Caco-2 (cell line): ENCODE measurements at regions of chr3 and their contacts with region 1.

Region 1: DNA sequence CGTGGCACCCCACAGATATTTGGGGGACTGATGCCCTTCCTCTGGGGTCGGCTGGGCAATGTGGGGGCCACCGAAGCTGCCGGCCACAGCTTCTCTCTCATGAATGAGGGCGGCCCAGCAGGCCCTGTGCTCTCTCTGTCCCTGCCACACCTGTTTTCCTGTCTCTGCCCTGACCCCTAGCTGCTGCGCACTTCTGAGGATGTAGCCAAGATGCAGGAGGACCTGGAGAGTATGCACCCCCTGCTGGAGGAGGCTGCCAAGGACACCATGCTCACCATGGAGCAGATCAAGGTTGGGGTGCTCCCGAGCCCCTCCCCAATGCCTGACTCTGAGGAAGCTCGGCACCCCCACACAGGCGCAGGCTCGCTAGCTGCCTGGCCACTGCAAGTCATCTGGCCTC is 59.7 kb downstream of the SEMA3G start:
- DNase-seq: peak; percentile 82
- H3K4me3 ChIP-seq: no peak overlapping the region
- H3K4me3 Mint-ChIP-seq: no peak overlapping the region
- H3K27ac Mint-ChIP-seq: no peak overlapping the region
- H3K4me1 ChIP-seq: no peaks in the 10 kb centered on the region
- H3K4me1 Mint-ChIP-seq: no peaks in the 10 kb centered on the region
- H3K27me3 ChIP-seq: no peaks in the 10 kb centered on the region
- H3K27me3 Mint-ChIP-seq: no peaks in the 10 kb centered on the region
- CTCF ChIP-seq: peak; percentile 73 to 94

Region 2: GRCh38 chr3:52181543-52181942 is 203.6 kb before region 1 on chr3:
- CTCF ChIA-PET with region 1: no interaction called
- POLR2A ChIA-PET with region 1: no interaction called
- intact Hi-C with region 1: no loop called
- DNase-seq: no peak
- H3K4me3 ChIP-seq: no peak overlapping the region
- H3K4me3 Mint-ChIP-seq: no peak overlapping the region
- H3K27ac Mint-ChIP-seq: no peak overlapping the region
- H3K4me1 ChIP-seq: peaks cover 6% of the 10 kb centered on the region; the same call in 1 of the 2 replicates
- H3K4me1 Mint-ChIP-seq: no peaks in the 10 kb centered on the region
- H3K27me3 ChIP-seq: no peaks in the 10 kb centered on the region
- H3K27me3 Mint-ChIP-seq: no peaks in the 10 kb centered on the region
- CTCF ChIP-seq: no peak

Region 3: DNA sequence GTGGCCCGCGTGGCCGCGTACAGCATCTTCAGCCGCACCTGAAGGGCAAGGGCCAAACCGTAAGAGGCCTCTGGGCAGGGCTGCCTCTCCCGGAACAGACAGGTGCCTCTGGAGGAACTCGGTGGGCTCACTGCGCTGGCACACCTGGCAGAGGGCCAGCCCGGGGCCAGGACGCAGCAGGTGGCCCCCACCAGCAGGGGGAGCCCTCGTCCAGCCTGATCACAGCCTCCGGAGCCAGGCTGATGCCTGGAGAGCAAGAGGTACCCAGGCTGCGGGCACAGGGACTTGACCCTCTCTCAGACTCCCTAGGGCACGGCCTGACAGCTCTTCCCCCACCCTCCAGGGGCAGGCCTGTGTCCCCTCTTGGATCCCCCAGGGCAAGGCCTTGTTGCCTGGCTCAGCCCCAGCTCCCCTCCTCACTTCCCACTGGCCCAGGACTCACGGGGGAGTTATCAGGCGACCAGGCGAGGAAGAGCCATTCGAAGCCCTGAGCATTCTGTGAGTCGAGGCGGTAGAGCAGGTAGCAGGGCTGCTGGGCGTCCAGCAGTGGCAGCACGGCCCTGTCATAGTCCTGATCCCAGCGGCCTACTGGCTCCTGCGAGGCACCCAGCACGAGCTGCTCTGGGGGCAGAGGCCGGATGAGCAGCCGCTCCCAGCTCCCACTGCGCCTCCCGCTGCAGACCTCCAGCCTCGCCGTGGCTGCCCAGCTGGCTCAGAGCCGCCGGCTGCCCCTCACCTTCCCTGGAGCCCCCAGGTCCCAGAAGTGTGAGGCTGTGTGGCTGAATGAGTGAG is 153.5 kb before region 1 on chr3:
- CTCF ChIA-PET with region 1: interaction called, 9 read pairs
- POLR2A ChIA-PET with region 1: no interaction called
- intact Hi-C with region 1: loop called (anchors 1 kb)
- DNase-seq: peak in 1 of 2 experiments; percentile 81
- H3K4me3 ChIP-seq: no peak overlapping the region
- H3K4me3 Mint-ChIP-seq: no peak overlapping the region
- H3K27ac Mint-ChIP-seq: no peak overlapping the region
- H3K4me1 ChIP-seq: no peaks in the 10 kb centered on the region
- H3K4me1 Mint-ChIP-seq: no peaks in the 10 kb centered on the region
- H3K27me3 ChIP-seq: no peaks in the 10 kb centered on the region
- H3K27me3 Mint-ChIP-seq: no peaks in the 10 kb centered on the region
- CTCF ChIP-seq: peak; percentile 79 to 91